ENCODE measurements at regions of chr4 and their contacts with region 1.

Region 1: DNA sequence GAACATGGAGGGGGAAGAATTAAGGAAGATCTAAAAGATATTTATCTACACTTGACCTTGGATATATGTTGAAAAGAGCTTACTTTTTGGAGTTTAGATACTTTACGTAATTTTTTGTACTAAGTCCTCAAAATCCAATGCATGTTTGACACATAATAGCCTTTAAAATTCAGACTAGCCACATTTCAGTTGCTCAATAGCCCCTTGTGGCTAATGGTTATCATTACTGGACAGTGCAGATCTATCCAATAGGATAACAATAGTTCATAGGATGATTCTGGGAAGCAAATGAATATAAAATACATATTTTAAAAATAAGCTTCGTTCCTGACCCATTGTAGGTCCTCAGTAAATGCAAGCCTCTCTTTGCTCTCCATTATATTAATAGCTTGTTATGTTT is 13.8 kb downstream of the AP1AR start:
- DNase-seq: no peak
- H3K4me3 ChIP-seq: no peak overlapping the region
- H3K27ac ChIP-seq: no peak overlapping the region
- H3K4me1 ChIP-seq: no peaks in the 10 kb centered on the region
- H3K27me3 ChIP-seq: no peaks in the 10 kb centered on the region
- CTCF ChIP-seq: no peak
- POLR2A ChIP-seq: no peak

Region 2: GRCh38 chr4:112130906-112131305 is 114.5 kb before region 1 on chr4:
- intact Hi-C with region 1: loop called (anchors 10 kb)
- DNase-seq: no peak
- H3K4me3 ChIP-seq: no peak overlapping the region
- H3K27ac ChIP-seq: no peak overlapping the region
- H3K4me1 ChIP-seq: no peaks in the 10 kb centered on the region
- H3K27me3 ChIP-seq: no peaks in the 10 kb centered on the region
- CTCF ChIP-seq: no peak
- POLR2A ChIP-seq: no peak

Measured in breast epithelium (tissue), 4 donors.